T-cell (primary cell): ENCODE measurements at regions of chr4 and their contacts with region 1.

Region 1: DNA sequence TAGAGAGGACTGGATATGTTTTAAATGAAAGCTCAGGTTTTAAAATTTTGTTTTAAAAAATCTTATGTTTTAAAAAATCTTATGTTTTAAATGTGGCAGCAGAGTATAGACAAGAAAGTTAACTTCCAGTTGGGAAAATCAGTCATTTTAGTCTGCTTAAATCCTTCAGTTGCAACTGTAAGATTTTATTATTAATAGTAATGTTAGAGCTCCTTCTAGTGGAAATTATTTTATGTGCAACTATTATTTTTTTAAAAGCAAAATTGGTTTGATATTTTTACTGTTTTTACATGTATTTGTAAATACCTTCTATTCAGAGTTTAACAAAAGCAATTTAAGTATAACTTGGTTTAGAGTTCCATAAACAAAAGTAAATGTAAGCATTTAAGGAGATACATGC is 8.5 kb upstream of the NUDT6 start:
- DNase-seq: peak in 1 of 35 experiments; percentile 33
- ATAC-seq: no peak
- H3K4me3 ChIP-seq: no peak overlapping the region
- H3K4me3 Mint-ChIP-seq: no peak overlapping the region
- H3K27ac ChIP-seq: no peak overlapping the region
- H3K27ac Mint-ChIP-seq: no peak overlapping the region
- H3K4me1 ChIP-seq: no peaks in the 10 kb centered on the region
- H3K4me1 Mint-ChIP-seq: peaks cover 0 to 8% (median 7%) of the 10 kb centered on the region in 3 donors
- H3K27me3 ChIP-seq: no peaks in the 10 kb centered on the region
- H3K27me3 Mint-ChIP-seq: no peaks in the 10 kb centered on the region

Region 2: GRCh38 chr4:122469457-122469856 is 461.4 kb before region 1 on chr4:
- CTCF ChIA-PET with region 1: no interaction called
- POLR2A ChIA-PET with region 1: no interaction called
- DNase-seq: no peak
- ATAC-seq: no peak
- H3K4me3 ChIP-seq: no peak overlapping the region
- H3K4me3 Mint-ChIP-seq: no peak overlapping the region
- H3K27ac ChIP-seq: no peak overlapping the region
- H3K27ac Mint-ChIP-seq: no peak overlapping the region
- H3K4me1 ChIP-seq: no peaks in the 10 kb centered on the region
- H3K4me1 Mint-ChIP-seq: peaks cover 0 to 11% (median 3%) of the 10 kb centered on the region in 3 donors
- H3K27me3 ChIP-seq: no peaks in the 10 kb centered on the region
- H3K27me3 Mint-ChIP-seq: peaks cover 0 to 3% of the 10 kb centered on the region in 2 donors

Region 3: DNA sequence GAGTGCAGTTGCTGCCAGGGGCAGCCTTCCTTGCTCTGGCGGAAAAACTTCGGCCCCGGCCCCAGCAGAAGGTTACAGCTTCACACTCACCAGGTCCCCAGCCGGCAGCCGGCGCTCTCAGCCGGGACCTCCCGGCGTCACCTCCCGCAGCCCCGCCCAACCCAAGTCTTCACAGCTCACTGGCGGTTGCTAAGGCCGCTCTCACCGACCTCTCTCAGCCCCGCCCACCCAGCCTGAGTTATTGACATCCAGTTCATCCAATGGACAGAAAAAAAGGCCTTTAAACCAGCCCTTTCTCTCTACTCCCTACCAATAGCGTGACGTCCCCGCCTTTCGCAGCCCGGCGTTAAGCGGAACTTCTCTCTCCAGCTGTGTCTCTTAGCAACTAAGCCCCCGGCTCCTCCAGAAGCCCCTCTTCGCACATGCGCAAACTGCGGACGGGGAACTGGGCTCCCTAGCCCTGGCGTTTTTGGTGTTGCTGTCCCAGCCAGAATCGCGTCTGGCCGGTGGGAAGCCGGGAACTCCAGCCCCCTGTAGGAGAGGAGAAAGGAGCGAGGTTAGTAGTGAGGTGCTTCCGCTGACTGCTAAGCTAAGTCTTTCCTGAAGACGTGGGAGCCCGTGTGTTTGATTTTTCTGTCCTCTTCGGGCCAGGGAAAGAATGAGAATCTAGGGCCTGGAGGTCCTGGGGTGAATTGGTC is 198.4 kb before region 1 on chr4 and contains the start of gene BBS12:
- CTCF ChIA-PET with region 1: interaction called in 1 of 2 experiments, 18 read pairs
- POLR2A ChIA-PET with region 1: no interaction called
- DNase-seq: peak; percentile 95 to 100 (median 98)
- ATAC-seq: peak; percentile 97 to 99 (median 99)
- H3K4me3 ChIP-seq: peak within 1 kb of the TSS; percentile 87 to 96
- H3K4me3 Mint-ChIP-seq: peak within 1 kb of the TSS; percentile 96 to 98 (median 98)
- H3K27ac ChIP-seq: peak within 1 kb of the TSS; percentile 86
- H3K27ac Mint-ChIP-seq: peak within 1 kb of the TSS; percentile 95 to 96
- H3K4me1 ChIP-seq: peaks cover 7 to 12% of the 10 kb centered on the region in 2 experiments
- H3K4me1 Mint-ChIP-seq: peaks cover 23 to 27% (median 24%) of the 10 kb centered on the region in 3 donors
- H3K27me3 ChIP-seq: no peaks in the 10 kb centered on the region
- H3K27me3 Mint-ChIP-seq: no peaks in the 10 kb centered on the region
- total RNA-seq, gene BBS12: 0.43 to 4.6 (median 3.2) TPM

Region 4: DNA sequence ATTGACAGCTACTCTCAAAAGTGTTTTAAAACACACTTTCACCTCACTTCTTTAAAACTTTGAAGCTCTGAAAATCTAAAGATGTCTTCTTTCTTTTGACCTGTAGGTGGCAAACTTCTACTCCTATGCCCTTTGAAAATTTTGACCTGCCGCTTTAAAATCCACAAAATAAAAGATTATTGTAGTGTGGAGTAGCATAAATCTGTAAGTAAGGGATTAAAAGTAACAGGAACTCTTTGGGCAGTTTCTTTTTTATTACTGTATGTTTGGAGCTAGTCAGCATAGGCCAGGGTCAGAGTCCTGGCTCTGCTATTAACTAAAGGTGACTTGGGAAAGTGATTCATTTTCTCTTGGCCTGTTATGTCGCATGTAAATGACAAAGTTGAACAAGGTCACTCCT is 172.8 kb before region 1 on chr4:
- CTCF ChIA-PET with region 1: interaction called, 11 to 31 read pairs
- POLR2A ChIA-PET with region 1: no interaction called
- DNase-seq: peak in 1 of 35 experiments; percentile 57
- ATAC-seq: peak in 1 of 4 experiments; percentile 36
- H3K4me3 ChIP-seq: no peak overlapping the region
- H3K4me3 Mint-ChIP-seq: no peak overlapping the region
- H3K27ac ChIP-seq: no peak overlapping the region
- H3K27ac Mint-ChIP-seq: no peak overlapping the region
- H3K4me1 ChIP-seq: peaks cover 2 to 6% of the 10 kb centered on the region in 2 experiments
- H3K4me1 Mint-ChIP-seq: peaks cover 10 to 15% (median 12%) of the 10 kb centered on the region in 3 donors
- H3K27me3 ChIP-seq: peaks cover 0 to 3% of the 10 kb centered on the region in 2 experiments
- H3K27me3 Mint-ChIP-seq: peaks cover 5 to 16% of the 10 kb centered on the region in 2 donors